Activated B cell treated with CpG ODN at 0.5 μM for 24 hours (primary cell): ENCODE measurements at regions of chr1 and their contacts with region 1.

Region 1: DNA sequence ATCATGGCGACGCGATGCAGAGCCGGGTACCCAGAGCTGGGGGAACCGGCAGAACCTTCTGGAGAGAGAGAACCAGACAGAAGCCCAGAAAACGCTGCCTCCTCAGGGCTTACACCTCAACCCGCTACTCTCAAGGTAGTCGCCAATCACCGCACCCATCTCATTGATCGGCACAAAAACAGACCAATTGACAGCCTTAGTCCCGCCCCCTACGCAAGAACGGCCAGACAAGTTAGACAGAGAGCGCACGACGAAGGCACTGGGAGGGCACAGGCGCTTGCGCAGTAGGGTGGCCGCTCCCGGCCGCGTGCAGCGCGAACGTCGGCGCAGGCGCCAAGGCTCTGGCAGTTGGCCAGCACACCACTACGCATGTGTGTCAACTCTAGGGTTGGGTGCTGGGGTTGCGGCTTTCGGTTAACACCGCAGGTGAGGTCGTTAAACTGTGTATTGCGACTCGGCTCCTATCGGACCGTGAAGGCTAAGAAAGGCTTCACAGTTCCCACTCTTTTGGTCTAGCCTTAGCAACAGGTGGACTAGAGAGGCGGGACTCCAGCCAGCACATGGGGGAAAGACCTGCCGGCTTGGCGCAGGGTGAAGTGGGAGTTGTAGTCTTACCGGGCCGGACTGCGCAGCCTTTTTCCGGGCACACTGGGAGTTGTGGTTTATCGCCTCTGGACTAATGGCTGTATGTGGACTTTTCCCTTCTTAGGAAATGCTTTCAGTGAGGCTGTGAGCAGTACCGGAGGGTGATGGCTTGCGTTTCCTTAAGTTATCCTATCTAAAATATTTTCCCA is at the starts of genes CCT3 and TSACC:
- DNase-seq: peak; percentile 99
- ATAC-seq: peak; percentile 95
- H3K4me3 Mint-ChIP-seq: peak within 1 kb of the TSS; percentile 97
- H3K27ac Mint-ChIP-seq: peak within 1 kb of the TSS; percentile 97
- H3K4me1 Mint-ChIP-seq: peaks cover 40% of the 10 kb centered on the region
- H3K27me3 Mint-ChIP-seq: no peaks in the 10 kb centered on the region
- CTCF ChIP-seq: no peak
- total RNA-seq, gene CCT3: 255 and 260 TPM in 2 replicates
- total RNA-seq, gene TSACC: 0.44 TPM in 1 of 2 replicates, not detected in the other

Region 2: DNA sequence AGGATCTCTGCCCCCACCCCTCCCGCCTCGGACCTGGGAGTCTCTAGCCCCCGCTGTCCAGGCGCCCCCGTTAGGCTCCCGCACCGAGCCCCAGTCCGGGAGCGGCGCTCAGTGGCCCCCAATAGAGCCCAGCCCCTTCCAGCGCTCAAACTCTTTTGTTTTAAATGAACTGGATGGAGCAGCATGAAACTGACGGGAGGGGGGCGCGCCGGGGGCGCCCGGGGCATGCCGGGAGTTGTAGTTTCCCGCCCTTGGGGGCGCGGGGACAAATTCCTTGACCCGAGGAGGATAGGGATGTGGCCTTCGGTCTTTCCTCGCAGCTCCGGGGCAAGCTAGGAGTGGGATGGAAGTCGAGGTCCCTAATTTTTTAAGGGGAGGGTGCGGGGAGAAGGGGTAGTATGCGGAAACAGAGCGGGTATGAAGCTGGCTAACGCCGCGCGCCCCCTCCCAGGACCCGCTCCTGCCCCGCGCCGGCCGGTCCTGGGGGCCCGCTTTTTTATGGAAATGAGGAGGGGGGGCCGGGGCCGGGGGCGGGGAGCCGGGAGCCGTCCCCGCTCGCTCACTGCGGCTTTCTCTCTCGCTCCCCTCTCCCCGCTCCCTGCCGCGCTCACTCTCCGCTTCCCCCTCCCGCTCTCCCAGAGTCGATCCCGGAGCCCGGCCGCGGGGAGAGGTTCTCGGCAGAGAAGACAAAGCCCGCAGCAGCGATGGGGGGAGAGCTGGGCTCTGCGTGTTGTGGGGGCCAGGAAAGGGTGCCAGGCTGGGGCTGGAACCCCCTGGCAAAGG is 255.9 kb before region 1 on chr1 and contains the start of gene MEX3A:
- CTCF ChIA-PET with region 1: no interaction called
- POLR2A ChIA-PET with region 1: no interaction called
- intact Hi-C with region 1: loop called (anchors 5 kb)
- DNase-seq: peak; percentile 66
- ATAC-seq: peak; percentile 88
- H3K4me3 Mint-ChIP-seq: peak within 1 kb of the TSS; percentile 89
- H3K27ac Mint-ChIP-seq: no peak within 1 kb of the TSS
- H3K4me1 Mint-ChIP-seq: peaks cover 16% of the 10 kb centered on the region
- H3K27me3 Mint-ChIP-seq: peaks cover 14% of the 10 kb centered on the region
- CTCF ChIP-seq: no peak
- total RNA-seq, gene MEX3A: 0.39 and 0.47 TPM in 2 replicates

Region 3: GRCh38 chr1:156226116-156226538 is 112.2 kb before region 1 on chr1:
- CTCF ChIA-PET with region 1: no interaction called
- POLR2A ChIA-PET with region 1: no interaction called
- intact Hi-C with region 1: no loop called
- DNase-seq: no peak
- ATAC-seq: no peak
- H3K4me3 Mint-ChIP-seq: no peak overlapping the region
- H3K27ac Mint-ChIP-seq: no peak overlapping the region
- H3K4me1 Mint-ChIP-seq: peaks cover 4% of the 10 kb centered on the region
- H3K27me3 Mint-ChIP-seq: no peaks in the 10 kb centered on the region
- CTCF ChIP-seq: no peak

Region 4: DNA sequence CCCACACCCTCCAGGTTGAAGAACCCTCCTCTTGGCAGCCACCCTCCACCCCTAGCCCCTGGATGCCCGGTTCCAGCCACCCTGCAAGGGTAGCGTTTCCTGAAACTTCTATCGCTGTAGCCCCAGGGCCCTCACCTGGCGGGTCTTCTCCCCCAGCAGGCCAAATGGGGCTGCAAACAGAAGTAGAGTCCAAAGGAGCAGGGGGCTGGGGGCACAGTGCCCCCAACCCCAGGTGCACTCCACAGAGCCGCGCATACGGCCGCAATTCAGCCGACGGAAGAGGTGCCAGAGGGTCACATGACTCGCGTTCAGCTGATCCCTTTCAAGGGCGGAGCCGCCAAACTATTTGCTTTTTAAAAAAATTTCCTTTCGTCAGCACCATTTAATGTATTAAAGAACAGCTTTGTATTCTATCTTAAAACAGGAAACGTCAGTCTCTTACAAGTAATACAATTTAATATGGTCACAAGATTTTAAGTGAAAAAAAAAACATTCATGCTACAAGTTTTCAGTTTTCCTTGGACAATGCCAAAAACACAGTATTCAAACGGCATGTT is 42.9 kb before region 1 on chr1 and contains the start of gene GLMP:
- CTCF ChIA-PET with region 1: no interaction called
- POLR2A ChIA-PET with region 1: no interaction called
- intact Hi-C with region 1: loop called (anchors 5 kb)
- DNase-seq: peak; percentile 28
- ATAC-seq: peak; percentile 56
- H3K4me3 Mint-ChIP-seq: peak within 1 kb of the TSS; percentile 87
- H3K27ac Mint-ChIP-seq: peak within 1 kb of the TSS; percentile 46
- H3K4me1 Mint-ChIP-seq: peaks cover 21% of the 10 kb centered on the region
- H3K27me3 Mint-ChIP-seq: no peaks in the 10 kb centered on the region
- CTCF ChIP-seq: no peak
- total RNA-seq, gene GLMP: 15.9 and 16.8 TPM in 2 replicates